Gastrocnemius medialis (tissue), 4 donors: ENCODE measurements at regions of chr20 and their contacts with region 1.

Region 1: DNA sequence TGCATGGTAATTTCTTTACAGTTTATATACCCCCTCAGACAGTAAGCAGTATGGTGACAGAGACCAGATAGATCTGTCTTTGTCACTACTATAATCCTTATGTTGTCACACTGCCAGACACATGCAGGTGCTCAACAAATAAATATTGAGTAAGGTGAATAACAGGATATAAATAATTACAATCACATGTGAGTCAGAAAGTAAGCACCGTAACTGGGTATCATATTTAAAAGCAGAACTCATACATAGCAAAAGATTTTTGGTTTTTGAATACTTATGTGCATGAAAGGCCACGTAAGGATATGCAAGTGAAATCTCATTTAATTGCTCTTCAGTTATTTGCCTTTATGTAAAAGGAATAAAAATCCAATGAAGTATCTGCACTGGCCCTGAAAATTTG is 17.4 kb downstream of the CNBD2 start:
- DNase-seq: no peak
- ATAC-seq: no peak
- H3K4me3 ChIP-seq: no peak overlapping the region
- H3K27ac ChIP-seq: no peak overlapping the region
- H3K4me1 ChIP-seq: no peaks in the 10 kb centered on the region
- H3K27me3 ChIP-seq: no peaks in the 10 kb centered on the region
- CTCF ChIP-seq: no peak
- POLR2A ChIP-seq: no peak

Region 2: GRCh38 chr20:36017034-36017951 is 31.5 kb after region 1 on chr20:
- in situ Hi-C with region 1: no loop called
- intact Hi-C with region 1: loop called (anchors 2 kb)
- DNase-seq: no peak
- ATAC-seq: no peak
- H3K4me3 ChIP-seq: no peak overlapping the region
- H3K27ac ChIP-seq: no peak overlapping the region
- H3K4me1 ChIP-seq: no peaks in the 10 kb centered on the region
- H3K27me3 ChIP-seq: no peaks in the 10 kb centered on the region
- CTCF ChIP-seq: no peak
- POLR2A ChIP-seq: no peak